K562 (cell line): ENCODE measurements at regions of chr11 and their contacts with region 1.

Region 1: GRCh38 chr11:120511116-120511819 is at the start of gene GRIK4:
- DNase-seq: peak; percentile 87 to 95 (median 92)
- ATAC-seq: peak; percentile 98
- H3K4me3 ChIP-seq: peak within 1 kb of the TSS; percentile 38
- H3K27ac ChIP-seq: no peak within 1 kb of the TSS
- H3K4me1 ChIP-seq: peaks cover 0 to 12% of the 10 kb centered on the region in 2 experiments; a peak in 2 of 5 replicates
- H3K27me3 ChIP-seq: peaks cover 41 to 68% of the 10 kb centered on the region in 2 experiments
- CTCF ChIP-seq: peak; percentile 88 to 94 (median 88)
- EP300 ChIP-seq: no peak
- POLR2A ChIP-seq: no peak
- RAD21 ChIP-seq: peak; percentile 91 to 94
- polyA plus RNA-seq, gene GRIK4: not detected

Region 2: GRCh38 chr11:120079750-120080490 is 431.3 kb before region 1 on chr11:
- CTCF ChIA-PET with region 1: no interaction called
- POLR2A ChIA-PET with region 1: no interaction called
- in situ Hi-C with region 1: no loop called
- intact Hi-C with region 1: no loop called
- DNase-seq: peak; percentile 21 to 61 (median 54)
- ATAC-seq: peak; percentile 85
- H3K4me3 ChIP-seq: no peak overlapping the region
- H3K27ac ChIP-seq: no peak overlapping the region
- H3K4me1 ChIP-seq: no peaks in the 10 kb centered on the region
- H3K27me3 ChIP-seq: no peaks in the 10 kb centered on the region
- CTCF ChIP-seq: peak; percentile 56 to 62 (median 60); a peak in 5 of 6 replicates
- EP300 ChIP-seq: no peak
- POLR2A ChIP-seq: no peak
- RAD21 ChIP-seq: no peak

Region 3: DNA sequence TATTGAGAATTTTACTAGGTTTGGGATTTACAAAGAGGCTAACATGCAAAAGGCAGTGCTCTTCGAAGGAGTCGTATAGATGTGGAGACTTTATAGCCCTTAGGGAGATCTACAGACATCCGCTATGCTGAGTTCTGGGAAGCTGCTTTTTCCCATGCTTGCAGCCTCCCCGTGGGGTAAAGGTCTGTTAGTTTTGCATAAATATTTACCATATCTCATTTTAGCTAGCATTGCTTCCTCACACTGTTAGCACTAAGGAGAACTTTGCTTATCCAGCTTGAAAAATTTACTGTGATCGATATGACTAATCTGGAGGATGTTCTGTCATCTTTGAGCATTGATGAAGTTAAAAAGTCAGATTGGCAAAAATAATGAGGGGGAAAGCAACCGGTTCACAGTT is 156.5 kb before region 1 on chr11:
- CTCF ChIA-PET with region 1: no interaction called
- POLR2A ChIA-PET with region 1: no interaction called
- in situ Hi-C with region 1: no loop called
- intact Hi-C with region 1: no loop called
- DNase-seq: no peak
- ATAC-seq: no peak
- H3K4me3 ChIP-seq: no peak overlapping the region
- H3K27ac ChIP-seq: no peak overlapping the region
- H3K4me1 ChIP-seq: peaks cover 5 to 10% of the 10 kb centered on the region in 2 experiments; a peak in 3 of 5 replicates
- H3K27me3 ChIP-seq: no peaks in the 10 kb centered on the region
- CTCF ChIP-seq: no peak
- EP300 ChIP-seq: no peak
- POLR2A ChIP-seq: no peak
- RAD21 ChIP-seq: no peak

Region 4: DNA sequence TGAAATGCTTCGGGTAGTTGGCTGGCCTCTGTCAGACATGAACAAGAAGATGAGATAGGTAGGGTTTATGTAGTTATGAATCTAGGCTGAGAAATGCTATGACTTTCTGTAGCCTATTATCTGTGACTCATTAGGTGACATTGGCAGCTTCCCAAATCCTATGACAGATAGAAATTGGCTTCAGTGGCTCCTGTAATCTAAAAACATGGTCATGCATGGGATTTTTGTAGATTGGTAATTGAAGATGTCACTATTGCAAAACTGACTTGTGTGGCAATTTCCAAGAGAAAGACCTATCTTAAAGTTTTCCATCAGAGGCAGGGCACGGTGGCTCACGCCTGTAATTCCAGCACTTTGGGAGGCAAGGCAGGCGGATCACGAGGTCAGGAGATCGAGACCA is 29.1 kb before region 1 on chr11:
- CTCF ChIA-PET with region 1: no interaction called
- POLR2A ChIA-PET with region 1: no interaction called
- in situ Hi-C with region 1: no loop called
- intact Hi-C with region 1: no loop called
- DNase-seq: peak in 2 of 4 experiments; percentile 20 to 42
- ATAC-seq: peak; percentile 32; the same call in 2 of the 3 replicates
- H3K4me3 ChIP-seq: no peak overlapping the region
- H3K27ac ChIP-seq: no peak overlapping the region
- H3K4me1 ChIP-seq: no peaks in the 10 kb centered on the region
- H3K27me3 ChIP-seq: no peaks in the 10 kb centered on the region
- CTCF ChIP-seq: no peak
- EP300 ChIP-seq: no peak
- POLR2A ChIP-seq: no peak
- RAD21 ChIP-seq: no peak

Region 5: DNA sequence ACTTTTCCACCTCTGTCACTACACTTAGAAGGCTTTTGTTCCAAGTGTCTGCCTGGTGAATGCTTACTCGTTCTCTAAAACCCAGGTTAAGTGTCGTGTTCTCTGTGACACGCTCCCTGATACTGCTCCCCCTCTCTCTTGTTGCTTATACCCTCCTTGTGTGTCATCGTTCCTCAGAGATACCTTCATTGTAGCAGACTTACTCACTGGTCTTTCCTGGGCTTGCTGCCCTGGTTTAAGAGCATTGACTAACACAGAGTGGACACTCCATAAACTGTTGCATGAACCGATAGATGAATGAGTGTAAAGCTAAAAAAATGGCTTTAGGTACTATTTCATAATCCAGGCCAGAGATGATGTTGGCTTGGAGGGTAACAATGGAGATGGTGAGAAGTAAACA is 171.6 kb after region 1 on chr11:
- CTCF ChIA-PET with region 1: interaction called, 22 read pairs
- POLR2A ChIA-PET with region 1: no interaction called
- in situ Hi-C with region 1: no loop called
- intact Hi-C with region 1: loop called (anchors 1 kb)
- DNase-seq: no peak
- ATAC-seq: no peak
- H3K4me3 ChIP-seq: no peak overlapping the region
- H3K27ac ChIP-seq: no peak overlapping the region
- H3K4me1 ChIP-seq: 0 out of 5 replicates have a peak, but pooled peaks cover 0 to 4% of the 10 kb centered on the region in 2 experiments
- H3K27me3 ChIP-seq: peaks cover 0 to 20% of the 10 kb centered on the region in 2 experiments; a peak in 3 of 5 replicates
- CTCF ChIP-seq: no peak
- EP300 ChIP-seq: no peak
- POLR2A ChIP-seq: no peak
- RAD21 ChIP-seq: no peak

Region 6: DNA sequence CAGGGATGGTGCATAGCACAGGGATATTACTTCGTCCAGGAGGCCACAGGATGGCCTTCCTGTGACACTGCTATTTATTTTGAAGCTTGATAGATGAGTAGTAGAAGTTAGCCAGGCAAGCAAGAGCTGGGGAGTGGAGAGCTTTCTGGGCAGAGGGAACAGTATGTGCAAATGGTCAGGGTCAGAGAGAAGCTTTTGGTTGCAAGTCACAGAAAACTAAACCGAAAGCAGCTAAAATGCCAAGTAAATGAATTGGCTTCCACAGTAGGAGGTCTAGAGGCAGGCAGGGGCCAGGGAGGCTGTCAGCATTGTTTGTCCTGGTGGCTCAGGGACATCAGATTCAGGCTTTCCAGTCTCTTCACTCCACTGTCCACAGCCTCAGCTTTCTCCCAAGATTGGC is 247.8 kb after region 1 on chr11:
- CTCF ChIA-PET with region 1: no interaction called
- POLR2A ChIA-PET with region 1: no interaction called
- in situ Hi-C with region 1: no loop called
- intact Hi-C with region 1: no loop called
- DNase-seq: no peak
- ATAC-seq: no peak
- H3K4me3 ChIP-seq: no peak overlapping the region
- H3K27ac ChIP-seq: no peak overlapping the region
- H3K4me1 ChIP-seq: no peaks in the 10 kb centered on the region
- H3K27me3 ChIP-seq: no peaks in the 10 kb centered on the region
- CTCF ChIP-seq: no peak
- EP300 ChIP-seq: no peak
- POLR2A ChIP-seq: no peak
- RAD21 ChIP-seq: no peak

Region 7: DNA sequence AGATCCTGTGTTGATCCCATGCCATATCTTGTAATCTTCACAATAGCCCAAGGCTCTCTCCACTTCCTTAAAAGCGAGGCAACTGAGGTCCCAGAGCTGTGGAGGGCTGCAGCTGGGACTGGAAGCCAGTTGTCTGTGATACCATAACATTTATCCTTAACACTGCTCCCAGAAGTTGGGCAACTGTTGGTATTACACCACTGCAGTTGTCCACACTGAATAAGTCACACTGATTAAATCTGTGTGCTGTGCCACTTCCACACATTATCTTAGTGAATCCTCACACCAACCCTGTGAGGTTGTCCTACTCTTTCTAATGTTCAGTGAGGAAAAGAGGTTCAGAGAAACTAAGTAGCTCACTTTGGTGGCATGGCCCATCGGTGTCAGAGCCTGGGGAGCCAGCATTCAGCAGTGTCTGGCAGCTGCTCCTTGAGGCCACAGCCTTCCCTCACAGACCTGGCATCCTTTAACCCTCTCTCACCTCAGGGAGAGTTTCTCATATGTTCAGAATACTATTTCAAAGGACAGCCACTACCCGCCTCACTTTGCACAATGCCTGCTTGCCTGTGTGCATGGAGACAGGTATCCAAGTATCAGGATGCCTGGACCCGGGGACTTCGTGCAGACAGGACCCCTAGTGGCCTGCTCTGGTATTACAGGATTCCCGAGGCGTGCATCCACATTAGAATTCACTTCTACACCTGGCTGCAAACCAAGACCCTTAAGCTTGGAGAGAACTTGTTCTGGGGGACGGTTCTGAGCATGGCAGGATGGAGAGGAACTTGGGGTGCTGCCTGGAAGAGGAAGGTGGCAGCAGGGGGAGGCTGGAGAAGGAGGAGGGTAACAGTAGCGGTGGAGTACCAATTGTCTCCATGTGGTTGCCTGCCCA is 290.8 kb after region 1 on chr11:
- CTCF ChIA-PET with region 1: interaction called, 5 read pairs
- POLR2A ChIA-PET with region 1: no interaction called
- in situ Hi-C with region 1: no loop called
- intact Hi-C with region 1: loop called (anchors 1 kb)
- DNase-seq: peak; percentile 60 to 77 (median 70)
- ATAC-seq: peak; percentile 89
- H3K4me3 ChIP-seq: no peak overlapping the region
- H3K27ac ChIP-seq: no peak overlapping the region
- H3K4me1 ChIP-seq: no peaks in the 10 kb centered on the region
- H3K27me3 ChIP-seq: peaks cover 3 to 21% of the 10 kb centered on the region in 2 experiments; a peak in 3 of 5 replicates
- CTCF ChIP-seq: peak; percentile 68 to 88 (median 74)
- EP300 ChIP-seq: no peak
- POLR2A ChIP-seq: no peak
- RAD21 ChIP-seq: peak in 1 of 2 experiments; percentile 53; a peak in 2 of 4 replicates

Region 8: GRCh38 chr11:120952461-120953434 is 441.5 kb after region 1 on chr11:
- CTCF ChIA-PET with region 1: interaction called, 9 read pairs
- POLR2A ChIA-PET with region 1: no interaction called
- in situ Hi-C with region 1: no loop called
- intact Hi-C with region 1: loop called (anchors 5 kb)
- DNase-seq: peak; percentile 77 to 87 (median 84)
- ATAC-seq: peak; percentile 96
- H3K4me3 ChIP-seq: no peak overlapping the region
- H3K27ac ChIP-seq: no peak overlapping the region
- H3K4me1 ChIP-seq: no peaks in the 10 kb centered on the region; a peak in 1 of 5 replicates
- H3K27me3 ChIP-seq: peaks cover 0 to 34% of the 10 kb centered on the region in 2 experiments; a peak in 3 of 5 replicates
- CTCF ChIP-seq: peak; percentile 62 to 82 (median 73)
- EP300 ChIP-seq: no peak
- POLR2A ChIP-seq: no peak
- RAD21 ChIP-seq: peak; percentile 42 to 61

Region 9: GRCh38 chr11:121112498-121113455 is 601.5 kb after region 1 on chr11:
- CTCF ChIA-PET with region 1: interaction called, 4 read pairs
- POLR2A ChIA-PET with region 1: no interaction called
- in situ Hi-C with region 1: no loop called
- intact Hi-C with region 1: loop called (anchors 2 kb)
- DNase-seq: peak; percentile 22 to 57 (median 42)
- ATAC-seq: peak; percentile 93
- H3K4me3 ChIP-seq: no peak overlapping the region
- H3K27ac ChIP-seq: no peak overlapping the region
- H3K4me1 ChIP-seq: no peaks in the 10 kb centered on the region
- H3K27me3 ChIP-seq: peaks cover 5 to 16% of the 10 kb centered on the region in 2 experiments; a peak in 3 of 5 replicates
- CTCF ChIP-seq: peak; percentile 50 to 69 (median 50); a peak in 5 of 6 replicates
- EP300 ChIP-seq: no peak
- POLR2A ChIP-seq: no peak
- RAD21 ChIP-seq: peak; percentile 58 to 71

Region 10: GRCh38 chr11:121194731-121195596 is 683.7 kb after region 1 on chr11:
- CTCF ChIA-PET with region 1: interaction called, 5 read pairs
- POLR2A ChIA-PET with region 1: no interaction called
- in situ Hi-C with region 1: no loop called
- intact Hi-C with region 1: loop called (anchors 1 kb)
- DNase-seq: peak; percentile 46 to 76 (median 58)
- ATAC-seq: peak; percentile 95
- H3K4me3 ChIP-seq: no peak overlapping the region
- H3K27ac ChIP-seq: no peak overlapping the region
- H3K4me1 ChIP-seq: no peaks in the 10 kb centered on the region
- H3K27me3 ChIP-seq: peaks cover 0 to 2% of the 10 kb centered on the region in 2 experiments; a peak in 2 of 5 replicates
- CTCF ChIP-seq: peak; percentile 62 to 78 (median 71)
- EP300 ChIP-seq: no peak
- POLR2A ChIP-seq: no peak
- RAD21 ChIP-seq: peak; percentile 49 to 72

Region 11: DNA sequence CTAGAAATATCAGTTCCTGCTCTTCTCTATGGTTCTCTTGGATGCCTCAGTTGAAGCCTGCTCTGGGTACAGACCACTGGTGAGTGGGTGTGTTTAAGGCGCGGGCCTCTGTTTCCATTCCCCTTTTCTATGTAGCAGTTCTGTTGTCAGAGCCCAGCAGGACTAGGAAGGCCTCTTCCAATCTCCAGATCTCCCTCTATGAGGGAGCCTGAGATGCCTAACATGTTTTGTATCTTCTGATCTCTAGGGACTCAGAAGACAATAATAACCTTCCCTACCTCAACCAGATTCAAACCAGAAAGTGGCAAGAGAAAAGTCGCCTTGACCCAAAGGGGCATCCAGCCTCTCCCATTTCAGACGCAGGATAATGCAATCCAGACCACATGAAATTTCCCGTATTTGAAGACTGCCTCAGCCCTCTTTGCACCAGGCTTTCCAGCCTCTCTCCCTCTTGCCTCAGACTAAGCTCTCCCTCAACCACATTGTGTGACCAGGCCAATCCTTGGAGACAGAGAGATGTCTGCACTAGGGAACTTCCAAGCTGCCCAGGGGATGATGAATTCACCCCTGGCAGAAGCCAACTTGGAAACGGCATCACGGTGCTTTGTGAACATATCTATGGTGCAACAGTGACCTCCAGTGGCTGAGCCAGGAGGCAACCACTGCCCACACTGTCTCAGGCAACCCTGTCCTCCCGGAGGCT is 1994.2 kb after region 1 on chr11:
- CTCF ChIA-PET with region 1: no interaction called
- POLR2A ChIA-PET with region 1: no interaction called
- in situ Hi-C with region 1: no loop called
- intact Hi-C with region 1: loop called (anchors 5 kb)
- DNase-seq: peak; percentile 43 to 57 (median 47)
- ATAC-seq: peak; percentile 91
- H3K4me3 ChIP-seq: no peak overlapping the region
- H3K27ac ChIP-seq: no peak overlapping the region
- H3K4me1 ChIP-seq: no peaks in the 10 kb centered on the region
- H3K27me3 ChIP-seq: no peaks in the 10 kb centered on the region
- CTCF ChIP-seq: peak; percentile 53 to 73 (median 62)
- EP300 ChIP-seq: no peak
- POLR2A ChIP-seq: no peak
- RAD21 ChIP-seq: peak; percentile 48 to 58